ENCODE measurements at regions of chr1 and their contacts with region 1.

Region 1: GRCh38 chr1:37595440-37596319 is at the start of gene GNL2:
- DNase-seq: peak; percentile 99
- ATAC-seq: peak; percentile 100
- total RNA-seq, gene GNL2: 22.0 TPM

Region 2: GRCh38 chr1:37553927-37554808 is 41.5 kb before region 1 on chr1 and contains the start of gene SNIP1:
- intact Hi-C with region 1: loop called (anchors 5 kb)
- DNase-seq: peak; percentile 94
- ATAC-seq: peak; percentile 93
- total RNA-seq, gene SNIP1: 11.8 TPM

Region 3: DNA sequence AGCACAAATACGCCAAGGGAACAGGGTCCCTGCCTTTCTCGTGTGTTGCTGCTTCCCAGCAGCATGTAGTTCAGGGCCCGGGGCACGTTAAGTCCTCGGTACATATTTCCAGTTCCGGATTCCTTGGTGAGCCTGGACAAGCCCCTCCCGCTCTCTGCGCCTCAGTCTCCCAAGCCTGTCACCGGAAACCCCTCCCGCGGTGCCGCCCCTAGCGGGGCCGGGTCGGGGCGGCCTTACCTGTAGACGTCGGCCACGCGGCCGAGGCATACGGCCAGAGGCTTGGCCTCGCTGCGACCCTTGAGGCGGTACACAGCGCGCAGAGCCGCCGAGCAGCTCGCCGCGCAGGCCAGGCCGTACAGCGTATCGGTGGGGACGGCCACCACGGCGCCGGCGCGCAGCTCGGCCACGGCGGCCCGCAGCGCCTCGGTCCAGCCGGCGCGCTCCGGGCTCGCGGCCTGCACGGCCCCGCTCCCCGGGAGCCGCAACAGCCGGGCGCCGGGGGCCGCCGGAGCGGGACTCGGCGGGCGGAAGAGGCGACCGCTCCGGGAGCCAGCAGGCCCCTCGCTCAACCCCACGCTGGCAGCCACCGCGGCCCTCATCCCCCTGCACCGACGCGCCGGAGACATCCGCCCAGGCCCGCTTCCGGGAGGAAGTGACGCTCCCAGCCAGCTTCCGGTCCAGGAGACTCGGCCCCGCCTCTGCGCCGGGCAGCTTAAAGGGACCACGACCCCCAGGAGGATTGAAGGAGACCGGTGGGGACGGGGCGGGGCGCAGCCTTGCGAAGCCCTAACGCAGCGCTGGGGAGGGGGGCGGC is 212.1 kb after region 1 on chr1 and contains the starts of genes C1orf122 and YRDC:
- intact Hi-C with region 1: loop called (anchors 1 kb)
- DNase-seq: peak; percentile 97
- ATAC-seq: peak; percentile 95
- total RNA-seq, gene C1orf122: 52.6 TPM
- total RNA-seq, gene YRDC: 4.8 TPM

Region 4: DNA sequence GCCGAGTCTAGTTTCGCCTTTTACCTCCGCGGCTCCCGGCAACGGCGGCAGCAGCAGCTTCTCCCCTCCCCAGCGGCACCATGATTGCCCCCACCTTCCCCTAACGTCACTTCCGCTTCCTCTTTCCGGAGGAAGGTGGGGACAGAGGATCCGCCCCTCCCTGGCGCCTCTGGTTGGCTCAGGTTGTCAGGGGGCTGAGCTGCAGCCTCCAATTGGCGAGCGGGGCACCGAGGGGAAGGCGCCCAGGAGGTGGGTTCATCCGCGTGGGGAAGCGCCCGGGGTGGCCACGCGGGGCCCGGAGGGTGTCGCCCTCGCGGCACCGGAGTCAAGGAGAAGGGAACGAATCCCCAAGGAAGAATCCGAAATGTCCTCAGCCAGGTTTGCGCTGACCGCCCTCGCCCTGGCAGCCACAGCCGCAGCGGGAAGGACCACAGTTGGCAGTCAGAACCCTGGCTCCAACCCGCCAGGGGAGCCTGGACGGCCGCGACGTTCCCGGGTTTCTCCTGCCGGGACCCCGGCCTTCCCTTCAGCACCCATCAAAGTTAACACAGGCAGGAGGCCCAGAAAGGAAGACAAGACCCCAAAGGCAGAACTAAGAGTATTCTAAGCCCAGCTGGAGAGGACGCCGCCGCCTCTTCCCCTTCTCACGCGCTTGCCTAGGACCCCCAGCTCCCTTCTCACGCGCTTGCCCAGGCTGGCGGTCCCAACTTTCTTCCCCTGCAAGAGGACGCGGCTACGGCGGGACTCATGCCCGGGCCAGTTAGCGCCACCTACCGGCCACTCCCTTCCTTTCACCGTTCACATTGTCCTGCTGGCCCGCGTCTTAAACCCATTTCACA is 264.0 kb after region 1 on chr1 and contains the start of gene MTF1:
- intact Hi-C with region 1: loop called (anchors 10 kb)
- DNase-seq: peak; percentile 98
- ATAC-seq: peak; percentile 99
- total RNA-seq, gene MTF1: 8.1 TPM